Calu3 (cell line): ENCODE measurements at regions of chr12 and their contacts with region 1.

Region 1: GRCh38 chr12:102769319-102769916 is 147.6 kb downstream of the PAH start:
- DNase-seq: peak; percentile 69
- H3K4me3 Mint-ChIP-seq: no peak overlapping the region
- H3K27ac Mint-ChIP-seq: no peak overlapping the region
- H3K4me1 Mint-ChIP-seq: no peaks in the 10 kb centered on the region
- H3K27me3 Mint-ChIP-seq: peaks cover 14% of the 10 kb centered on the region
- CTCF ChIP-seq: peak; percentile 63

Region 2: GRCh38 chr12:102095675-102096263 is 673.6 kb before region 1 on chr12:
- CTCF ChIA-PET with region 1: no interaction called
- intact Hi-C with region 1: loop called (anchors 5 kb)
- DNase-seq: peak; percentile 12
- H3K4me3 Mint-ChIP-seq: no peak overlapping the region
- H3K27ac Mint-ChIP-seq: no peak overlapping the region
- H3K4me1 Mint-ChIP-seq: no peaks in the 10 kb centered on the region
- H3K27me3 Mint-ChIP-seq: no peaks in the 10 kb centered on the region
- CTCF ChIP-seq: peak; percentile 20

Region 3: DNA sequence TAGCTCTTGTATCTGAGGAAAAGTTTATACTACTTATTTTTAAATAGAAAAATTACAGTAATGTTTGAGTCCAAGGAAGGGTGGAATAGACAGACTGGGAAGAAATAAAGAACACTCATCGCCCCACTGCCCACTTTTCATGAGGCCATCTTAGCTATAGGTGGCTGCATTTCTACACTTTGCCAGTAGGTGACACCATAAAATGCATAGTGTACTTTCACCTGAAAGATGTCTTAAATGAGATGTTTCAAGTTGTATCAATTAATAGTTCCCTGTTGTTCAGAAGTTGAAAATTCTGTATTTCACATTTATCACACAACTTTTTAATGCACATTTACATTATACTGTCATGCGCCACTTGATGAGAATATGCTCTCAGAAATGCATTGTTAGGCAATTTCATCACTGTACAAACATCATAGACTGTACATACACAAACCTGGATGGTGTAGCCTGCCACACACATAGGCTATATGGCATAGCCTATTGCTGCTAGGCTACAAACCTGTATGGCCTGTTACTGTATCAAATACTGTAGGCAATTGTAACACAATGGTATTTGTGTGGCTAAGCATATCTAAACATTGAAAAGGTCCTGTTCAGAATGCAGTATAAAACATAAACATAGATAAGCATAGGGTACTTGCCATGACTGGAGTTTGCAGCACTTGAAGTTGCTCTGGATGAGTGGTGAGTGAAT is 599.3 kb before region 1 on chr12:
- CTCF ChIA-PET with region 1: no interaction called
- intact Hi-C with region 1: loop called (anchors 1 kb)
- DNase-seq: peak; percentile 20
- H3K4me3 Mint-ChIP-seq: no peak overlapping the region
- H3K27ac Mint-ChIP-seq: no peak overlapping the region
- H3K4me1 Mint-ChIP-seq: peaks cover 7% of the 10 kb centered on the region
- H3K27me3 Mint-ChIP-seq: no peaks in the 10 kb centered on the region
- CTCF ChIP-seq: peak; percentile 46

Region 4: GRCh38 chr12:102638777-102639176 is 130.6 kb before region 1 on chr12:
- CTCF ChIA-PET with region 1: no interaction called
- intact Hi-C with region 1: no loop called
- DNase-seq: no peak
- H3K4me3 Mint-ChIP-seq: no peak overlapping the region
- H3K27ac Mint-ChIP-seq: no peak overlapping the region
- H3K4me1 Mint-ChIP-seq: peaks cover 8% of the 10 kb centered on the region
- H3K27me3 Mint-ChIP-seq: no peaks in the 10 kb centered on the region
- CTCF ChIP-seq: no peak

Region 5: DNA sequence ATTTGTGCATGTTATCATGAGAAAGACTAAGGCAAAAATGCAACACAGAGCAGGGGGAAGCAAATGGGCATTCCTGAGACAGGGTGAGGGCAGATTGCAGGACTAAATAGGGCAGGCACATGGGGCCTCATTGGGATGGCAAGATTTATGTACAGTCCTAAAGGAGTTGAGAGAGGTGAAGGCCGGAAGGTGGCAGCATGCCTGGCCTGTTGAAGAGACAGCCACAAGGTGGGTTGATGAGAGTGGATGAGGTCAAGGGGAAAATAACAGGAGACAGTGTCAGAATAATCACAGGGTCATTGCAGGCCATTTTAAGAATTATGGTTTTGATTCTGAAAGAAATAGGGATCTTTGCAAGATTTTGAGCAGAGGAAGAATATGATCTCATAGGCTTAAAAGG is 126.6 kb after region 1 on chr12:
- CTCF ChIA-PET with region 1: no interaction called
- intact Hi-C with region 1: no loop called
- DNase-seq: no peak
- H3K4me3 Mint-ChIP-seq: no peak overlapping the region
- H3K27ac Mint-ChIP-seq: no peak overlapping the region
- H3K4me1 Mint-ChIP-seq: no peaks in the 10 kb centered on the region
- H3K27me3 Mint-ChIP-seq: no peaks in the 10 kb centered on the region
- CTCF ChIP-seq: no peak